Cardiac septum (tissue), 1 donor: ENCODE measurements at regions of chr17 and their contacts with region 1.

Region 1: GRCh38 chr17:78168242-78168902 is at the start of gene SYNGR2:
- DNase-seq: peak; percentile 95
- total RNA-seq, gene SYNGR2: 116 TPM

Region 2: DNA sequence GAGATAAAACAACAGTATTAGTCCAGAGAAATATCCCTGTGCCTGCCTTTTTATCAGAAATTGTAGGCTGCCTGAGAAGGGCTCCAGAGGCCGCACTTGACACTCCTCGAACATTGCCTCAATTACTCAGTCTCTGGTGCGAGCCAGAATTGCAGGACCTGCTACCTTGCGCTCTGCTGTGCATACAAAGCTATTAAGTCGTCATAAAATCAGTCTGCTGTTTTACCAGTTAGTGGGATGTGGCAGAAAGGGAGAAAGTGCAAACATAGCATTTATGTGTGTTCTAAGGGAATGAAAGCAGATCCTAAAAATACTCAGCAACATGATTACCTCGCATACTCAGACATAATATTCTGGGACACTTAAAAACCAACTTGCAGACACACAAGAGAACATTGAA is 110.4 kb before region 1 on chr17:
- intact Hi-C with region 1: no loop called
- DNase-seq: no peak

Region 3: GRCh38 chr17:78112518-78113226 is 55.7 kb before region 1 on chr17:
- intact Hi-C with region 1: no loop called
- DNase-seq: peak; percentile 92

Region 4: DNA sequence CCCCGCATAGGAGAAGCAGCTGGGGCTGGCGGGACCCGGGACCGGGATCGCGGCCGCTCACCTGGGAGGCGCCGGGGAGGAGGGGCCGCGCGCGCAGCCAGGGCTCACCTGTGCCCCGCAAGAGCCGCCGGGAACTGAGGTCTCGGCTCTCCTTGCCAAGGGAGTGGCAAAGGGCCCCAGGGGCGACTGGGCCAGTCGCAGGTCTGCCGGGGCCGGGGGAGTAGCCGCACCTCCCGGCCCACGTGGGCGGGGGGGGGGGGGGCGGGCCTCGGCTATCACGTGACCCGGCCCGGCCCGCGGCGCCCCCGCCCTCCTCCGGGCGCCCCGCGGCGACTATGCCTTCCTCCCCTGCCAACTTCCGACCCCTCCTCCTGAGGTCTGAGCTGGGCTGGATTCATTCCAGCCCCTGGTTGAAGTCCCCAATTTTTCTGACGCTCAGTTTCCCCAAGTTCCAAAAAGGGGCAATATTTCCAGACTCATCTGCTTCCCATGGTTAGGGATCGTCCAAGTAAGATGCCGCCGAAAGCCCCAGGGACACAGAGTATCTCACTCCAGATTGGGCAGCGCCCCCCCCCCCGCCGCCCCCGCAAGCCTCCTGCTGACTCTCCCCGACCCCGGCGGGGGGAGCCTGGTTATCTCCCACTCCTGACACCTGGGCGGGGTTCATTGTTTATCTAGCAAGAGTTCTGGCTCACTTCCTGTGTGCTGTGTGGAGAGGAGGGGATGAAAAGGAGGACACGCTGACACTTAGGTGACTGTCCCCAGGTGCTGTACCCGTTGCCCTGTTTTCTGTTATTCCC is 39.6 kb before region 1 on chr17 and contains the start of gene TMC6:
- intact Hi-C with region 1: loop called (anchors 2 kb)
- DNase-seq: peak; percentile 83
- total RNA-seq, gene TMC6: 80.1 TPM